Heart left ventricle (tissue), 16 donors: ENCODE measurements at regions of chr3 and their contacts with region 1.

Region 1: DNA sequence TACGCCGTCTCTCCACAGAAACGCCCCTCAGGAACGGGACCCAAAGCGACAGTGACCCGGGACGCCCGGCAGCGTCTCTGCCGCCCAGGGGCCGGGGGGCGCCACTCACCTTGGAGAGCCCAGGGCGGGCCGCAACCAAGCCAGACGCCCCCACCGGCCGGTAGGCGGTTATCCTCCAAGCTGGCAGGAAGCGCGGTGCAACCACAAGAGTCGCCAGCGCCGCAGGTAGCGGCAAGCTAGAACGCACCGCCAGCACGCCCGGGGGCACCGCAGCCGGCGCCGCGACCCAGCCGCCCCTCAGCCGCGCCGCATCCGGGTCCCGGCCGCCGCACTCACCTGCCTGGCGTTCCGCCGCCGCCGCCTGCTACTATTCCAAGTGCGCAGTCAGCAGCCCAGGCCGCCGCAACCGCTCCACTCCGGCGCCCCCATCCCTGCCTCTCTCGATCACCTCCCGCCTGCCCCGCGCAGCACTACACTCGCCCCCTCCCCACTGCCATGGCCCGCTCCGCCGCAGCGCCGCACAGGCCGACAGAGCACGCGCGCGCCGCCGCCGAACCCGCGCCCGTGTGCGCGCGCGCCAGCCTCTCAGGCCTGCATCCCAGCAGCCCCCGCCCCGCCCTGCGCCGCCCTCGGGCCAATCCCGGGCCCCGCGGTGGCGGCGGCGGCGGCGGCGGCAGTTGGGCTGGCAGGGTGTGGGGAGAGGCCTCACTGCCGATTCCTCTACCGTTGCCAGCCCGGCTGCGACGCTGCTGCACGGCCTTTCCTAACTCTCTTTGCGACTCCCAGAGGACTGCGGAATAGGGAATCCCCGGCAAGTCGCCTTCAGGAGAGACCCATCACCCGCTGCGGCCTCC is at the start of gene PIK3CB:
- DNase-seq: peak; percentile 91 to 96 (median 93)
- ATAC-seq: peak; percentile 95 to 99 (median 98)
- H3K4me3 ChIP-seq: peak within 1 kb of the TSS; percentile 86 to 100 (median 96)
- H3K27ac ChIP-seq: peak within 1 kb of the TSS; percentile 77 to 99 (median 96)
- H3K4me1 ChIP-seq: peaks cover 0 to 33% (median 10%) of the 10 kb centered on the region in 12 donors
- H3K27me3 ChIP-seq: no peaks in the 10 kb centered on the region
- CTCF ChIP-seq: peak in 11 of 12 donors; percentile 7 to 50 (median 28)
- POLR2A ChIP-seq: peak in 1 of 2 donors; percentile 83
- total RNA-seq, gene PIK3CB: 23.4 to 38.1 (median 29.4) TPM

Region 2: DNA sequence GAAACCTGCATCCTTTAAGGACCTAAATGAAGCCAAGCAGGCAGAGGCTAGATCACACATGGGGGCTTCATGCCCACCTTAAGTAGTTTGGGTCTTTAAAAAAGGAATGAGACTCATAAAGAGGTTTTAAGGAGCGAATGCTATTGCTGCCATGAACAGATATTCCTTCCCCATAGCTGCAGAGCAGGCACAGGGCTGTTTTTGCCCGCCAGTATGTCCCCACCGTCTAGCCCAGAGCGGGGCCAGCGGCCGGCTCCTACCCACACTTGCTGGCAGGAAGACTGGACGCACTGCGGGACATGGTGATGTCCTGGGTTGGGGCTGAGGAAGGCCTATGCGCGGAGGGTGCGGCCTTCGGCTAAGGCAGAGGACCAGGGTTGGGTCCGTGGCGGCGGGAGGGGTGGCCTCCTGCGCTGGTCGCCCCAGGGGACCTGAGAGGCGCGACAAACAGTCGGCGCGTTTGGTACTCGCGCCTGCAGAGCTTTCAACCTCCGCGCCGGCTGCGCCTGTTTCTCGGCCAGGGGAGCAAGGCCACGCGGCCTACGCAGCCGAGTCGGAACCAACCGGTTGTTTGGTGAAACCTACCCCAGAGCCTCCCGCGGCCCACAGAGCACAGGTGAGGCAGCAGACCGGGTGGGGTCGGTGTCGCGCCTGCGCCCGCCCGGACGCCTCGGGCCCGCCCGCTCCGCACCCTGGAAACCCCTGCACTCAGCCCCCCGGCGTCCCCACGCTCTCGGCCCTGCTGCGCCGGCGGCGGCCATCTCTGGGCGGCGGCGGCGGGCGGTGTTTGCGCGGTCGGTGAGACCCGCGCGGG is 226.1 kb before region 1 on chr3 and contains the start of gene FAIM:
- intact Hi-C with region 1: loop called in 3 of 10 experiments (anchors 2 to 10 kb)
- DNase-seq: peak; percentile 60 to 86 (median 71)
- ATAC-seq: peak; percentile 65 to 88 (median 86)
- H3K4me3 ChIP-seq: peak within 1 kb of the TSS; percentile 64 to 94 (median 84)
- H3K27ac ChIP-seq: peak within 1 kb of the TSS; percentile 89 to 99 (median 96)
- H3K4me1 ChIP-seq: peaks cover 0 to 15% (median 7%) of the 10 kb centered on the region in 12 donors
- H3K27me3 ChIP-seq: peaks cover 0 to 3% (median 0%) of the 10 kb centered on the region in 9 donors
- CTCF ChIP-seq: no peak
- POLR2A ChIP-seq: no peak
- total RNA-seq, gene FAIM: 2.0 to 5.9 (median 3.6) TPM

Region 3: GRCh38 chr3:138694287-138695007 is 140.1 kb before region 1 on chr3:
- intact Hi-C with region 1: loop called in 1 of 10 experiments (anchors 5 kb)
- DNase-seq: no peak
- ATAC-seq: no peak
- H3K4me3 ChIP-seq: no peak overlapping the region
- H3K27ac ChIP-seq: no peak overlapping the region
- H3K4me1 ChIP-seq: peaks cover 0 to 6% (median 0%) of the 10 kb centered on the region in 12 donors
- H3K27me3 ChIP-seq: no peaks in the 10 kb centered on the region
- CTCF ChIP-seq: no peak
- POLR2A ChIP-seq: no peak

Region 4: GRCh38 chr3:138774529-138775253 is 59.9 kb before region 1 on chr3:
- intact Hi-C with region 1: loop called in 3 of 10 experiments (anchors 10 kb)
- DNase-seq: peak in 4 of 5 donors; percentile 62 to 74 (median 70)
- ATAC-seq: peak; percentile 85 to 96 (median 94)
- H3K4me3 ChIP-seq: no peak overlapping the region
- H3K27ac ChIP-seq: peak overlapping the region; percentile 37 to 79 (median 59)
- H3K4me1 ChIP-seq: peaks cover 9 to 41% (median 22%) of the 10 kb centered on the region in 12 donors
- H3K27me3 ChIP-seq: no peaks in the 10 kb centered on the region
- CTCF ChIP-seq: peak in 1 of 12 donors; percentile 7
- POLR2A ChIP-seq: no peak

Region 5: DNA sequence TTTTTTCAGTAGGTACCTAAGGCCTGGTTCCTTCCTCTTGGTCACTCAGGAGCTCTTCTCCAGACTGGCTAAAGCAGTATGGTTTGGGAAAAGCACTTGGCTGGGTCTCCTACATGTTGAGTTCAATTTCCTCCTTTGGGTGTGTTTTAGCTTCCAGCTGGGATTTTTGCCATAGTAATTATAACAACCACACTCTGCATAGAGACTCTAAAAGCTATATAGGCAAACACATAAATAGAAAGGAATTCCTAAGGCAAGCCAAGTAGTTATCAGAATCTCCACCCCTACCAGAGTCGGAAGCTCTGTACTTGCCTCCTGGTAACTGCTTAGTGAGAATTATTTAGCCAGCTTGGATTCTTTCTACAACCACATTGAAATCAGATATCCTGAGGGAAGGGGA is 63.7 kb after region 1 on chr3:
- intact Hi-C with region 1: loop called in 2 of 10 experiments (anchors 2 to 5 kb)
- DNase-seq: peak in 1 of 5 donors; percentile 20
- ATAC-seq: peak; percentile 87 to 95 (median 92)
- H3K4me3 ChIP-seq: no peak overlapping the region
- H3K27ac ChIP-seq: peak overlapping the region in 10 of 12 donors; percentile 12 to 73 (median 56)
- H3K4me1 ChIP-seq: peaks cover 7 to 26% (median 19%) of the 10 kb centered on the region in 12 donors
- H3K27me3 ChIP-seq: no peaks in the 10 kb centered on the region
- CTCF ChIP-seq: no peak
- POLR2A ChIP-seq: no peak